ENCODE measurements at regions of chr19 and their contacts with region 1.

Region 1: GRCh38 chr19:32748497-32748896 is 28.9 kb downstream of the TDRD12 start:
- DNase-seq: peak in 9 of 14 experiments; percentile 8 to 55 (median 17)
- ATAC-seq: peak; percentile 18
- H3K4me3 ChIP-seq: no peak overlapping the region
- H3K4me3 Mint-ChIP-seq: no peak overlapping the region
- H3K27ac ChIP-seq: no peak overlapping the region
- H3K27ac Mint-ChIP-seq: peak overlapping the region; percentile 16
- H3K4me1 ChIP-seq: peaks cover 28% of the 10 kb centered on the region
- H3K4me1 Mint-ChIP-seq: peaks cover 16% of the 10 kb centered on the region
- H3K27me3 ChIP-seq: peaks cover 3 to 5% of the 10 kb centered on the region in 2 experiments
- H3K27me3 Mint-ChIP-seq: peaks cover 20% of the 10 kb centered on the region
- CTCF ChIP-seq: peak; percentile 16

Region 2: DNA sequence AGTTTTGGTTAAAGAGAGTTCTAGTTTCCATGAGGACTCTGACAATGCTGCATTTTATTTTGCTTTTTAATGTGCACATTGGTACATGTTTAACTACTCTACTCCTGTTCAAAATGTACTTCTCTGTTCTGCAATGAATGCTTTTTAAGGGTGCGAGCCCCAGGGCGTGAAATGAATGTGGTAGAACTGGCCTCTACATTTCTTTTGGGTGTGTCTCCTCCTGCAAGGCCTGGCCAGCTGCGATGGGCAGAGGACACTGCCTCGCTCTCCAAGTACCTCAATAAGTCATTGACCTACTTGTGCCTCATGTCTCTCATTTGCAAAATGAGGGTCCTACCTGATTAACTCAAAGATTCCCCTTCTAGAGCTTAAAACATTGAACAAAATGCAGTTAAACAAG is 66.2 kb before region 1 on chr19:
- CTCF ChIA-PET with region 1: no interaction called
- POLR2A ChIA-PET with region 1: no interaction called
- intact Hi-C with region 1: loop called in 1 of 2 experiments (anchors 5 kb)
- DNase-seq: no peak
- ATAC-seq: no peak
- H3K4me3 ChIP-seq: no peak overlapping the region
- H3K4me3 Mint-ChIP-seq: no peak overlapping the region
- H3K27ac ChIP-seq: no peak overlapping the region
- H3K27ac Mint-ChIP-seq: no peak overlapping the region
- H3K4me1 ChIP-seq: no peaks in the 10 kb centered on the region
- H3K4me1 Mint-ChIP-seq: peaks cover 3% of the 10 kb centered on the region
- H3K27me3 ChIP-seq: peaks cover 7 to 16% of the 10 kb centered on the region in 2 experiments
- H3K27me3 Mint-ChIP-seq: peaks cover 4% of the 10 kb centered on the region
- CTCF ChIP-seq: no peak

Region 3: GRCh38 chr19:32691291-32691951 is 57.1 kb before region 1 on chr19 and contains the start of gene NUDT19:
- CTCF ChIA-PET with region 1: no interaction called
- POLR2A ChIA-PET with region 1: interaction called, 8 read pairs
- intact Hi-C with region 1: loop called in 1 of 2 experiments (anchors 10 kb)
- DNase-seq: peak; percentile 50 to 86 (median 72)
- ATAC-seq: peak; percentile 77
- H3K4me3 ChIP-seq: peak within 1 kb of the TSS; percentile 65
- H3K4me3 Mint-ChIP-seq: peak within 1 kb of the TSS; percentile 96
- H3K27ac ChIP-seq: peak within 1 kb of the TSS; percentile 31 to 55
- H3K27ac Mint-ChIP-seq: peak within 1 kb of the TSS; percentile 80
- H3K4me1 ChIP-seq: peaks cover 44% of the 10 kb centered on the region
- H3K4me1 Mint-ChIP-seq: peaks cover 51% of the 10 kb centered on the region
- H3K27me3 ChIP-seq: no peaks in the 10 kb centered on the region
- H3K27me3 Mint-ChIP-seq: no peaks in the 10 kb centered on the region
- CTCF ChIP-seq: no peak
- total RNA-seq, gene NUDT19: 7.9 to 8.2 TPM

Region 4: GRCh38 chr19:32798201-32798600 is 49.7 kb after region 1 on chr19:
- CTCF ChIA-PET with region 1: no interaction called
- POLR2A ChIA-PET with region 1: interaction called, 8 read pairs
- intact Hi-C with region 1: loop called (anchors 1 to 5 kb)
- DNase-seq: no peak
- ATAC-seq: no peak
- H3K4me3 ChIP-seq: no peak overlapping the region
- H3K4me3 Mint-ChIP-seq: no peak overlapping the region
- H3K27ac ChIP-seq: no peak overlapping the region
- H3K27ac Mint-ChIP-seq: no peak overlapping the region
- H3K4me1 ChIP-seq: peaks cover 51% of the 10 kb centered on the region
- H3K4me1 Mint-ChIP-seq: peaks cover 68% of the 10 kb centered on the region
- H3K27me3 ChIP-seq: no peaks in the 10 kb centered on the region
- H3K27me3 Mint-ChIP-seq: no peaks in the 10 kb centered on the region
- CTCF ChIP-seq: no peak

Measured in CD4-positive, alpha-beta T cell (primary cell).